ENCODE measurements at regions of chr2 and their contacts with region 1.

Region 1: DNA sequence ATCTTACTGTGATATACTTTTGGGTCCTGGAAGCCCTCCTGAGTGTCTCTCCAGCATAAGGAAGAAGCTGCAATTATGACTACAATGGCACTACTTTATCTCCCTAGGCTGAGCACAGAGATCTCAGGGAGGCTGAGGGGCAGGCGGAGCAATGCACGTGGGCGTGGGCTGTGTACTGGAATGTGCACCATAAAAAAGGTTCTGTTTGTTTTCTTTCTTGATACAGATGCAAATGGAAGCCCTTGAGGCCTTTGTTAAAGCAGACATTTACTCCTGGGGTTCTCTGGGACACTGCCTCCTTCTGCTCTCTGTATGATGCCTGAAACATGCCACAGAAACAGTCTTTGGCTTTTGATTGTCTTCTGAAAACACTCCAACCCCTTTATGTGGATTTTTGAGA is 79.1 kb upstream of the DLX2 start:
- DNase-seq: no peak
- H3K4me3 ChIP-seq: no peak overlapping the region
- CTCF ChIP-seq: no peak

Region 2: DNA sequence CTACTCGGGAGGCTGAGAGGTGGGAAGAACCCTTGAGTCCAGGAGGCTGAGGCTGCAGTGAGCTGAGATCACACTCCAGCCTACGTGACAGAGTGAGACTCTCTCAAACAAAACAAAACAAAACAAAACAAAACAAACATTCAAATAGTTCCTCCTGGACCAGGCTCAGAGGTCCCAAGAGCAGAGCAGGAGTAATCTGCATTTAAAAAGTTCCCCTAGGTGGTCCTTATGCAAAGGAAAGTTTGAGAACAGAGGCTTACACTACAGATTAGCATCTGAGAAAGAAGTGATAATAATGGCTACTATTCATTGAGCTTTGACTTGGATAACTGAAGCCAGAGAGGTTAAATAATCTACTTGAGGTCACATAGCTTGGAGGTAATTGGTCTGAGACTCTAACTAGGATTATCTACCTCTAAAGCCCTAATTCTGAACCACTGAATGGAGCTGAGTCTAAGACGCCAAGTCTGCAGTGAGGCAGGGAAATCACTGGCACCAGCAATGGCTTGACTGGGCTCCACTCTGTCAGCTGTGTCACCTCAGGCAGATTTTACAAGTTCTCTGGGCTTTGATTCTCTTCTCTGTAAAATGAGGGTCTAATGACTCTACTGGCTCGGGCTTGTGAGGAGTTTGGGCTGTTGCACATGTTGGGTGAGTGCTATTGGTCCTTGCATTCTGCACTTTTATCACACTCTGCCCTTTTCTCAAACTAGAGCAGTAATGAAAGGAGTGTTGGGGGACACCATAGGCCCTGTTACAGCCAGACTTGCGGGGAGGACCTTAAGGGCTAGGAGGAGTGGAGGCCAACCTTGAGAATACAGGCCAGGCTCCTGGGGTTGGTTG is 49.9 kb before region 1 on chr2:
- in situ Hi-C with region 1: no loop called
- DNase-seq: no peak
- H3K4me3 ChIP-seq: no peak overlapping the region
- CTCF ChIP-seq: no peak

Region 3: GRCh38 chr2:172442072-172442895 is 260.4 kb after region 1 on chr2:
- in situ Hi-C with region 1: loop called (anchors 5 kb)
- DNase-seq: peak; percentile 83
- H3K4me3 ChIP-seq: no peak overlapping the region
- CTCF ChIP-seq: no peak

Measured in astrocyte of the cerebellum (primary cell).